Activated naive CD4-positive, alpha-beta T cell treated with anti-CD3 and anti-CD28 coated beads for 36 hours (primary cell): ENCODE measurements at regions of chr4 and their contacts with region 1.

Region 1: DNA sequence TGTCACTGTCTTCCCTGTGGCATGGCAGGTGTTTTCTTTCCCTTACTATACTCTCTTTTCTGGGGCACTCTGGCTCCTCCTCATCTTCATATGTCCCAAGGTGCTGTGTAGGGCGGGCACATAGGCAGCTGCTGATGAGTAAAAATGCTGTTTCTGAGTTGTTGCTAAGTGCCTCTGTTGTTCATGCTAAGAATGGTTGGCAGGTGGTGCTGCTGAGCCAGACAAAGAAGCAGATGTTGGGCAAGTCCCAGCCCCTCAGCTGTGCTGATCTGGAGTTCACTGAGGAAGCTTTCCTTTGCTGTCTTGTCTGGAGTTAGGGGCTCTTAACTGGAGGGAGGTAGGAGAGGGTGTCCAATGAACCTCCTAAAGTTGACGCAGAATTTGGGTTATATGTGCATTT is 40.6 kb downstream of the HADH start:
- DNase-seq: peak; percentile 92
- H3K4me3 Mint-ChIP-seq: peak overlapping the region; percentile 52
- H3K27ac Mint-ChIP-seq: peak overlapping the region; percentile 97
- H3K4me1 Mint-ChIP-seq: peaks cover 70% of the 10 kb centered on the region
- H3K27me3 Mint-ChIP-seq: no peaks in the 10 kb centered on the region

Region 2: GRCh38 chr4:107017443-107018343 is 1012.6 kb before region 1 on chr4:
- CTCF ChIA-PET with region 1: no interaction called
- intact Hi-C with region 1: no loop called
- DNase-seq: no peak
- H3K4me3 Mint-ChIP-seq: no peak overlapping the region
- H3K27ac Mint-ChIP-seq: no peak overlapping the region
- H3K4me1 Mint-ChIP-seq: no peaks in the 10 kb centered on the region
- H3K27me3 Mint-ChIP-seq: no peaks in the 10 kb centered on the region

Region 3: DNA sequence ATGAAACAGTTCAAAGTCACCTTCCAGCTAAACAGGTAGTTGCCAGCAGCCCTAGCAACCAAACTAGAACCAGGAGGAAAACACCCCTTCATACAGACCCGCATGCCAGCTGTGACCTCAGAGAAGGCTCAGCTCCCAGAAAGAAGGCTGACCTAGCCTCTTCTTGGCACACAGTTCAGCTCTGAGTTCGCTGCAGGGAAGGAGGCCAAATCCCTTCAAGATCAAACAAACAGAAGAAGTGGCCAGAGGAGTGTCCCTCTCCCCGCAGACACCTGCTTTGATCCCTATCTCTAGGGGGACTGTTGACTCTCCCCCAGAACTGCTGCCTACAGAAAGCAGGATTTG is 15.3 kb after region 1 on chr4:
- CTCF ChIA-PET with region 1: interaction called, 10 read pairs
- intact Hi-C with region 1: loop called (anchors 1 kb)
- DNase-seq: peak; percentile 67
- H3K4me3 Mint-ChIP-seq: no peak overlapping the region
- H3K27ac Mint-ChIP-seq: peak overlapping the region; percentile 89
- H3K4me1 Mint-ChIP-seq: peaks cover 68% of the 10 kb centered on the region
- H3K27me3 Mint-ChIP-seq: no peaks in the 10 kb centered on the region

Region 4: DNA sequence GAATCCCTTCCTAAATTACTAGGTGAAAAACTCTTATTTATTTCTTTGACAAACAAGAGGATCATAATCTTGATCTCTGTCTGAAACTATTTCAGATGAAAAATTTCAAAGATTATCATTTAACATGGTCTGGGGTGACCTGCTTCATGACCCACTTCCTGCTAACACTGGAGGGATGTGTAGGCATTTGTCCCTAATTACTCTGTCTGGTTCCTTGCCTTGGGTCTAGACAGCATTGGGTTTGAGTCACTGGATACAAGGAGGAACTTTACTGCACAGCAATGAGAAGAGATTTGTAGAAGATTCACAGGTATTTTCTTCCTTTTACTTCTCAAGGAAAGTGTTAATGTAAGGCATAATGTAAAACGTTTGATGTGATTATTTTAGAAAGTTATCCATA is 70.5 kb after region 1 on chr4:
- CTCF ChIA-PET with region 1: interaction called, 11 read pairs
- intact Hi-C with region 1: loop called (anchors 1 kb)
- DNase-seq: no peak
- H3K4me3 Mint-ChIP-seq: peak overlapping the region; percentile 7
- H3K27ac Mint-ChIP-seq: peak overlapping the region; percentile 89
- H3K4me1 Mint-ChIP-seq: peaks cover 92% of the 10 kb centered on the region
- H3K27me3 Mint-ChIP-seq: no peaks in the 10 kb centered on the region

Region 5: GRCh38 chr4:108148316-108148715 is 118.0 kb after region 1 on chr4:
- CTCF ChIA-PET with region 1: interaction called, 7 read pairs
- intact Hi-C with region 1: loop called (anchors 1 kb)
- DNase-seq: peak; percentile 77
- H3K4me3 Mint-ChIP-seq: peak overlapping the region; percentile 53
- H3K27ac Mint-ChIP-seq: peak overlapping the region; percentile 99
- H3K4me1 Mint-ChIP-seq: peaks cover 91% of the 10 kb centered on the region
- H3K27me3 Mint-ChIP-seq: no peaks in the 10 kb centered on the region

Region 6: GRCh38 chr4:108355186-108355901 is 325.0 kb after region 1 on chr4:
- CTCF ChIA-PET with region 1: interaction called, 4 read pairs
- intact Hi-C with region 1: loop called (anchors 1 kb)
- DNase-seq: peak; percentile 76
- H3K4me3 Mint-ChIP-seq: peak overlapping the region; percentile 62
- H3K27ac Mint-ChIP-seq: peak overlapping the region; percentile 88
- H3K4me1 Mint-ChIP-seq: peaks cover 61% of the 10 kb centered on the region
- H3K27me3 Mint-ChIP-seq: no peaks in the 10 kb centered on the region

Region 7: DNA sequence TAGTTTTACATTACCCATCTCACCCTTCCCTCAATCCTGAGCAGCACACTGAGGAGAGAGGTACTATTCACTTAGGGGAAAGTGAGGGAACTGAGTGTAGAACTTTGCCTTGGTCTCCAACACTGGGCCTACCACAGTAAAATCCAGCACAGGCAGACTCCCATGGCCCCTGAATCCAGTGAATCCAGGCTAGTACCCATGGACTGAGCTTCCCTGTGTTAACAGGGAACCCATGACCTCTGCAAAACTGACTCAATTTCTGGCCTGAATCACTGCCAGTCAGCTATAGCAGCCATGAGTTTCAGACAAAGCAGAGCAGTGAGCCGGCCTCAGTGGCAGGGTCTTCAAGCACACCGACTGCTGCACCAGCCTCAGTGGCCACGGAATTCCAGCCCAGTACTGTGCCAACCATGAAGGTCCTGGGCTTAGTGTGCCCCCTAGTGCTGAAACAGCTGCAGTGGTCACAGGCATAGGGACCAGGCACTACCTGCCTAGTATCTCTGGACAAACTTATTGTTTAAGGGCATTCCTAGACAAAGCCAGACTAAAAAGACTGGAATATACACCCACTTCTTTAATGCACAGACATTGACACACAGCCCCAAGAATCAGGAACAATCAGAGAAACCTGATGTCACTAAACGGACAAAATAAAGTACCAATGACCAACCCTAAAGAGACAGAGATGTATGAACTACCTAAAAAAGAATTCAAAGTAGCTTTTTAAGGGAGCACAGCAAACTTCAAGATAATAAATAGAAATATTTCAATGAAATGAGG is 462.7 kb after region 1 on chr4:
- CTCF ChIA-PET with region 1: interaction called, 17 read pairs
- intact Hi-C with region 1: loop called (anchors 1 kb)
- DNase-seq: peak; percentile 53
- H3K4me3 Mint-ChIP-seq: no peak overlapping the region
- H3K27ac Mint-ChIP-seq: no peak overlapping the region
- H3K4me1 Mint-ChIP-seq: no peaks in the 10 kb centered on the region
- H3K27me3 Mint-ChIP-seq: no peaks in the 10 kb centered on the region